BJ (cell line): ENCODE measurements at regions of chr5 and their contacts with region 1.

Region 1: DNA sequence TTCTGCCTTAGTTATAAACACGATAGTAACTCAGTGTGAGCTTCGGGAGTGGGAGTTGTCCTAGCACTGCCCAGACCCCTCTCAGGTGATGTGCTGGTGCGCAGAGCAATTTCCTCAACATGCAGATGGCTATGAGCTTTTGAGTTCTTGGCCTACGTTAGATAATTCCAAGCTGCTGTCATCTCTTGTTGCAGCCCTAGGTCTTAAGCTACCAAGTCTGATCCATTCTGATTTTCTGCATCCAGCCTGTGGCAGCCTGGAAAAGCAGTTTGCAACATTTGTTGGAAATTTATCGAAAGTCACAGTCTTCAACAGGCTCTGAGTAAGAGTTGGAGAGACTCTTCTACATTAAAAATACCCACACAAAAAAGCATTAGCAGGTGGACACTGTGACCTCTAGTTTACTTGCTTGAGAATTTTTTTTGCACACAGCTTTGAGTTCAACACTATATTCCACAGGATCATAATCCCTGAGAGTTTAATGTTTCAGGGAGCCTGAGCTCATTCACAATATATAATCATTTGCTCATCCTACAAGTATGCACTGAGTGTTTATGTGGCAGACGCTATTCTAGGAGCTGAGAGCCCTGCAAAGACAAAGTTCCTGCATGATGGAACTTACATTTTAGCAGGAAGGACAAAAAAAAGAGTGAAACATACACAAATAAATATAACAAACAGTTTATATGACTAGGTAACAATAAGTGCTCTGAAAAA is 91.6 kb downstream of the UBE2QL1 start:
- DNase-seq: no peak
- H3K4me3 ChIP-seq: no peak overlapping the region
- H3K27me3 ChIP-seq: no peaks in the 10 kb centered on the region; the same call in 1 of the 2 replicates
- CTCF ChIP-seq: no peak

Region 2: GRCh38 chr5:5209089-5209488 is 1331.2 kb before region 1 on chr5:
- CTCF ChIA-PET with region 1: no interaction called
- POLR2A ChIA-PET with region 1: no interaction called
- DNase-seq: peak; percentile 6
- H3K4me3 ChIP-seq: no peak overlapping the region
- H3K27me3 ChIP-seq: no peaks in the 10 kb centered on the region
- CTCF ChIP-seq: no peak

Region 3: DNA sequence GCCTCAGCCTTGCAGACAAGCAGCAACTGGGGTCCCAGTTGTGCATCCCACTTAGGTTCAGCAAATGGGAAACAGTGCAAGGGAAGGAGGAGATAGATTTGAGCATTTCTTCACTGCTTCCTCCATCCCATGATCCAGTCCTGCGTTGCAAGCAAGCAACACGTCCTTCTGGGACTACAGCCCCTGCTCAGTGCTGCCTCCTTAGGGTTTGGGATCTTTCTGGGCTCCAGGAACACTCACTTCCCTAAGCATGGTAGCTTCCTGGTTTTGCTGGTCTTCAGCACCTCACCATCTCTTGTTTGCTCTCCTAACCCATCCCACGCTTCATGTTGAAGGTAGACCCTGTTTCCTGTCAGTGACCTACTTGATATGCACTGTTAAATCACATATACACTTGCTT is 606.6 kb before region 1 on chr5:
- CTCF ChIA-PET with region 1: no interaction called
- POLR2A ChIA-PET with region 1: interaction called, 12 read pairs
- DNase-seq: no peak
- H3K4me3 ChIP-seq: no peak overlapping the region
- H3K27me3 ChIP-seq: no peaks in the 10 kb centered on the region
- CTCF ChIP-seq: no peak

Region 4: GRCh38 chr5:6527749-6528455 is 12.4 kb before region 1 on chr5:
- CTCF ChIA-PET with region 1: no interaction called
- POLR2A ChIA-PET with region 1: interaction called, 11 read pairs
- DNase-seq: no peak
- H3K4me3 ChIP-seq: no peak overlapping the region
- H3K27me3 ChIP-seq: no peaks in the 10 kb centered on the region
- CTCF ChIP-seq: no peak

Region 5: GRCh38 chr5:6576861-6577501 is 36.7 kb after region 1 on chr5:
- CTCF ChIA-PET with region 1: no interaction called
- POLR2A ChIA-PET with region 1: no interaction called
- DNase-seq: peak; percentile 20
- H3K4me3 ChIP-seq: no peak overlapping the region
- H3K27me3 ChIP-seq: peaks cover 7% of the 10 kb centered on the region
- CTCF ChIP-seq: peak; percentile 68